Sigmoid colon (tissue), 7 donors: ENCODE measurements at regions of chr2 and their contacts with region 1.

Region 1: GRCh38 chr2:240851078-240851991 is 17.3 kb upstream of the AGXT start:
- DNase-seq: peak; percentile 89
- H3K4me3 ChIP-seq: no peak overlapping the region
- H3K27ac ChIP-seq: no peak overlapping the region
- H3K4me1 ChIP-seq: no peaks in the 10 kb centered on the region
- H3K27me3 ChIP-seq: peaks cover 0 to 6% (median 0%) of the 10 kb centered on the region in 3 donors
- CTCF ChIP-seq: peak; percentile 83 to 96 (median 86)
- EP300 ChIP-seq: no peak
- POLR2A ChIP-seq: no peak

Region 2: DNA sequence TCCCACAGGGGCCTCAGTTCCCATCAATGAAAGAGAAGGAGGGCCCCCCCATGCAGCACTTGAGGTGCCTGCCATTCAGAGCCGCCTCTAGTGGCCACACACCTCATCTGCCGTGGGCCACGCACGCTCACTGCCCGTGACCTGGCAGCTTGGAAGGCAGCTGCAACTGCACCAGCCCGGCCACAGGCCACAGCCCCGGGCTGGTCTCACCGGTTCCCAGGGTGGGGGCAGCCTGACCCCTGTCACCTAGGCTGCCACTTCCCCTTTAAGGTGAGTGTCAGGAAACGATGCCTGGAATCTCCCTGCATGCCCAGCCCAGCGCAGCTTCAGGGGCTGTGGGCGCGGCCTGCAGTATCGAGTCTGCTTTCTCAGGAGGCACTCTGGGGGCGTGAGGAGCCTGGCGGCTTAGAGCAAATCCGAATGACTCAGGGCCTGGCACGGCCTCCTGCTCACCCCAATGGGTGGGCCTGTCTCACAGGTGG is 42.1 kb after region 1 on chr2:
- intact Hi-C with region 1: no loop called
- DNase-seq: no peak
- H3K4me3 ChIP-seq: no peak overlapping the region
- H3K27ac ChIP-seq: no peak overlapping the region
- H3K4me1 ChIP-seq: no peaks in the 10 kb centered on the region
- H3K27me3 ChIP-seq: no peaks in the 10 kb centered on the region
- CTCF ChIP-seq: no peak
- EP300 ChIP-seq: no peak
- POLR2A ChIP-seq: no peak

Region 3: GRCh38 chr2:241659150-241659739 is 807.9 kb after region 1 on chr2:
- intact Hi-C with region 1: loop called (anchors 5 kb)
- DNase-seq: peak; percentile 81
- H3K4me3 ChIP-seq: no peak overlapping the region
- H3K27ac ChIP-seq: peak overlapping the region in 3 of 4 donors; percentile 35 to 41 (median 39)
- H3K4me1 ChIP-seq: peaks cover 0 to 5% (median 0%) of the 10 kb centered on the region in 4 donors
- H3K27me3 ChIP-seq: no peaks in the 10 kb centered on the region
- CTCF ChIP-seq: peak in 3 of 4 experiments; percentile 62 to 75 (median 64)
- EP300 ChIP-seq: no peak
- POLR2A ChIP-seq: no peak